ENCODE measurements at regions of chr6 and their contacts with region 1.

Region 1: GRCh38 chr6:111483736-111484632 is 966 bp upstream of the REV3L start:
- DNase-seq: peak; percentile 94 to 95
- ATAC-seq: peak; percentile 85 to 89 (median 86)
- H3K4me3 ChIP-seq: peak overlapping the region; percentile 94
- H3K27ac ChIP-seq: peak overlapping the region; percentile 98
- H3K4me1 ChIP-seq: peaks cover 43% of the 10 kb centered on the region
- H3K27me3 ChIP-seq: no peaks in the 10 kb centered on the region
- CTCF ChIP-seq: no peak

Region 2: GRCh38 chr6:111259089-111259831 is 224.7 kb before region 1 on chr6:
- intact Hi-C with region 1: loop called in 1 of 2 experiments (anchors 5 kb)
- DNase-seq: peak; percentile 98 to 99
- ATAC-seq: peak; percentile 98 to 99 (median 98)
- H3K4me3 ChIP-seq: peak overlapping the region; percentile 75
- H3K27ac ChIP-seq: peak overlapping the region; percentile 87
- H3K4me1 ChIP-seq: peaks cover 7% of the 10 kb centered on the region
- H3K27me3 ChIP-seq: no peaks in the 10 kb centered on the region
- CTCF ChIP-seq: peak; percentile 95

Region 3: GRCh38 chr6:111536910-111537527 is 53.0 kb after region 1 on chr6:
- intact Hi-C with region 1: loop called in 1 of 2 experiments (anchors 5 kb)
- DNase-seq: no peak
- ATAC-seq: no peak
- H3K4me3 ChIP-seq: no peak overlapping the region
- H3K27ac ChIP-seq: peak overlapping the region; percentile 1
- H3K4me1 ChIP-seq: peaks cover 46% of the 10 kb centered on the region
- H3K27me3 ChIP-seq: no peaks in the 10 kb centered on the region
- CTCF ChIP-seq: no peak

Region 4: GRCh38 chr6:111605100-111605751 is 121.2 kb after region 1 on chr6:
- intact Hi-C with region 1: loop called in 1 of 2 experiments (anchors 1 kb)
- DNase-seq: peak; percentile 83 to 92
- ATAC-seq: peak; percentile 70 to 77 (median 73)
- H3K4me3 ChIP-seq: peak overlapping the region; percentile 78
- H3K27ac ChIP-seq: peak overlapping the region; percentile 99
- H3K4me1 ChIP-seq: peaks cover 43% of the 10 kb centered on the region
- H3K27me3 ChIP-seq: no peaks in the 10 kb centered on the region
- CTCF ChIP-seq: no peak

Region 5: GRCh38 chr6:111651185-111652034 is 167.4 kb after region 1 on chr6:
- intact Hi-C with region 1: loop called (anchors 5 kb)
- DNase-seq: peak; percentile 77 to 92
- ATAC-seq: peak; percentile 70 to 85 (median 83)
- H3K4me3 ChIP-seq: no peak overlapping the region
- H3K27ac ChIP-seq: peak overlapping the region; percentile 75
- H3K4me1 ChIP-seq: peaks cover 39% of the 10 kb centered on the region
- H3K27me3 ChIP-seq: no peaks in the 10 kb centered on the region
- CTCF ChIP-seq: no peak

Region 6: DNA sequence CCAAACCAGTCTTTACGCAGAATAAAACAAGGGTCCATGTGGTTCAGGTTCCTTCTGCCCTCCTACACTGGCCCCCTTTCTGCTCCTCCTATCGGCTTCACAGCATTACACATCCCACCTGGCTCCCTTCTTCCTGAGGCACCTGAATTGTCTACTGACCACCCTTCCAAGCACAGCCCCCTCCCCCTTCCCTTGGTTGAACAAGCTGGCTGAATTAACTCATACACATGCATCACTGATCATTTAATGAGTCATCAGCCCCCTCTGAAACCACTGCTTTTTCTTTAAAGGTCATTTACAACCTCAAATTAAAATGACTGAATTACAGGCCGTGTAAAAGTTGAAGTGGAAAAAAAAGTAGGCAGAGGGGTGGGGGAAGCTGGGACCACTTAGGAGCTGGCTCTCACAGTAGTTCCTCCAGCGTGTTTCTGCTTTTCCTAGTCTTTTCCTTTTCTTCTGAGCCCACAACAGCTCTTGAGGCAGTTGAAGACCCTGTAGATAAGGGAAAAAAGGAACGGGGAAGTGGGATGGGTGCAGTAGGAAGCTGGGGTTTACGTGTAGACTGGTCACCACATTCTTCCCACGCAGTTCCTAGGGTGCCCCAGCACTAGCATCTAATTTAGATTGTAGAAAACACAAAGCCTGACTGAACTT is 321.7 kb after region 1 on chr6:
- intact Hi-C with region 1: no loop called
- DNase-seq: no peak
- ATAC-seq: no peak
- H3K4me3 ChIP-seq: no peak overlapping the region
- H3K27ac ChIP-seq: no peak overlapping the region
- H3K4me1 ChIP-seq: no peaks in the 10 kb centered on the region
- H3K27me3 ChIP-seq: no peaks in the 10 kb centered on the region
- CTCF ChIP-seq: no peak

Region 7: GRCh38 chr6:111841822-111842221 is 357.8 kb after region 1 on chr6:
- intact Hi-C with region 1: no loop called
- DNase-seq: no peak
- ATAC-seq: no peak
- H3K4me3 ChIP-seq: no peak overlapping the region
- H3K27ac ChIP-seq: no peak overlapping the region
- H3K4me1 ChIP-seq: peaks cover 4% of the 10 kb centered on the region
- H3K27me3 ChIP-seq: no peaks in the 10 kb centered on the region
- CTCF ChIP-seq: no peak